Psoas muscle (tissue), 8 donors: ENCODE measurements at regions of chr20 and their contacts with region 1.

Region 1: GRCh38 chr20:43210901-43211300 is 21.2 kb upstream of the PTPRT start:
- DNase-seq: no peak
- ATAC-seq: no peak
- H3K4me3 ChIP-seq: no peak overlapping the region
- H3K27ac ChIP-seq: no peak overlapping the region
- H3K4me1 ChIP-seq: no peaks in the 10 kb centered on the region
- H3K27me3 ChIP-seq: peaks cover 0 to 6% (median 3%) of the 10 kb centered on the region in 3 donors
- CTCF ChIP-seq: no peak

Region 2: DNA sequence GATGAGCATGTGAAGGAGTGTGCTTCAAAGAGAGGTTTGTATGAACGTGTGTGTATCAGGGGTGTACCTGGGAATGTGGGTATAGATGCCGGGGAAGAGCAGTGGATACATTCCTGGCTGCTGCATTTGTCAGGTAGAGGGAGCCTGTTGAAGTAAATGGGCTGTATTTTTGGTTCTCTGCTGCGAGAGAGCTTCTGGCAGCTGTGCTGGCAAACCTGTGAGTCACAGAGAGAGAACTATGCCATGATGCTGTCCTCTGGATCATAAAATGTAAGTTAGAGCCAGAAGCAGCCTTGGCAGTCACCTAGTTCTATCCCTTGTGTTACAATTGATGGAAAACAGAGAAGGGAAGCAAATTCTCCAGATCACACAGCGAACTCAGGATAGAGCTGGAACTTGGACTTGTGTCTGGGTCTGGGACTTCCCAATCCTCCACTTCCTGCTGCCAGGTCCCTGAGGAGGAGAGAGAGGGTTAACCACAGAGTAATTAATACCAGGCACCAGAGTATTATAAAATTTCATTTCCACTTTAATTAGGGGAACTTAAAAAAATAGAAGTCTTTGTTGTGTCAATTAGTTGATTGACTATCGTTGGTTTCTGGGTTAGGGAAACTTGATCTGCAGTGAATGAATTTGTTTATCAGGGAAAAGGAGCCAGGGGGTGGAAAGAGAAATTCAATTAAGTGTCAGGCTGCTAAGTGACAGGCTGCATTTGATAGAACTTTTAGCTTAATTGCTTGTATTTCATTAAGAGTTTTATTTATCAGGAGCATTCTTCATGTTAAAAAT is 557.0 kb after region 1 on chr20:
- intact Hi-C with region 1: loop called in 1 of 2 experiments (anchors 10 kb)
- DNase-seq: no peak
- ATAC-seq: no peak
- H3K4me3 ChIP-seq: no peak overlapping the region
- H3K27ac ChIP-seq: no peak overlapping the region
- H3K4me1 ChIP-seq: no peaks in the 10 kb centered on the region
- H3K27me3 ChIP-seq: peaks cover 0 to 48% (median 7%) of the 10 kb centered on the region in 3 donors
- CTCF ChIP-seq: no peak